ENCODE measurements at regions of chr4 and their contacts with region 1.

Region 1: DNA sequence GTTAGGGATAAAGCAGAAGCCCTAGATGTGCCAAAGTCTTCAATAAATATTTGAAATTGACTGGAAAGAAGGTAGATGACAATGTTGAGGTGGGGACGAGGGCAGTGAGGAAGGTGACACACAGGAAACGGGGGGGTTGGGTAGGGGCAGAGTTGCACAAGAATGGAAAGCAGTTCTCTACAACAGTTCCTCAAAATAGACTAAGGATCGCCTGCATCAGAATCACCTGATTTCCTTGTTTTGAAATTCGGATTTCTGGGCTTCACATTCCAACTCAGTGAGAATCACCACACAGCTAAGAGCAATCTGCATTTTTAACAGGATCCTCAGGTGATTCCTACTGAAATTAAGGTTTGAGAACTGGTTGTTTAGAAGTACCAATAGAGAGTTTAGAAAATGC is 70.6 kb downstream of the ARFIP1 start:
- DNase-seq: no peak
- H3K4me3 Mint-ChIP-seq: no peak overlapping the region
- H3K27ac Mint-ChIP-seq: no peak overlapping the region
- H3K4me1 Mint-ChIP-seq: peaks cover 13% of the 10 kb centered on the region
- H3K27me3 Mint-ChIP-seq: no peaks in the 10 kb centered on the region

Region 2: GRCh38 chr4:152803541-152803940 is 46.8 kb before region 1 on chr4:
- intact Hi-C with region 1: no loop called
- DNase-seq: no peak
- H3K4me3 Mint-ChIP-seq: no peak overlapping the region
- H3K27ac Mint-ChIP-seq: no peak overlapping the region
- H3K4me1 Mint-ChIP-seq: peaks cover 46% of the 10 kb centered on the region
- H3K27me3 Mint-ChIP-seq: no peaks in the 10 kb centered on the region

Region 3: GRCh38 chr4:152862608-152863007 is 12.2 kb after region 1 on chr4:
- intact Hi-C with region 1: no loop called
- DNase-seq: no peak
- H3K4me3 Mint-ChIP-seq: no peak overlapping the region
- H3K27ac Mint-ChIP-seq: no peak overlapping the region
- H3K4me1 Mint-ChIP-seq: no peaks in the 10 kb centered on the region
- H3K27me3 Mint-ChIP-seq: no peaks in the 10 kb centered on the region

Region 4: DNA sequence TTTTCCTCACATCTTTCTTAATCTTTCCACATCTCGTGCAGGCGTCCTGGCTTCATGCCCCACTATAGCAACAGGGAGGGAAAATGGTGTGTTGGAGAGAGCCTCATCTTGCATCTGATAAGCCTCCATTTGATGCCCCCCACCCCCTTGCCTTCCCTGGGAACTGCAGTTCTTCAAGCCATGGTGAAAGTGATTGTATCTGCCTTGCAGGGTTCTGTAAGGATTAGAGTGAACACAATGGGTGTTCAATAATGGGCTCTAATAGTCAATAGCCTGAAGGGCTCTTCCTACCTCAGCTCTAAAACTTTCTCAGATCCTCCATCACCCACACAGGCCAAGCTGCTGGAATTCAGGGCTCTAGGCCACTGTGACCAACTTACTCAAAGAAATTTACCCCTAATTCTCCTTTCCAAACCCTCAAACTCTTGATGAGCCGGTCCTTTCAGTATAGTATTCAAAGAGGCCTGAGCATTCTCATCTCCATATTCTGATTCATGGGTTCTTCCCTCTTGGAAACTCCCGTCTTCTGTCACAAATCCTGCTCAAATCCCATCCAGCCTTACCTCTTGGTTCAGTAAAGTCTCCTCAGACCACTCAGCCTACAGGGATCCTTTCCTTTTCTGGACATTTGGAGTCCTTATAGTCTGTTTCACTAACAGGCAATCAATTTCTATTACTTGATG is 225.6 kb after region 1 on chr4:
- intact Hi-C with region 1: no loop called
- DNase-seq: no peak
- H3K4me3 Mint-ChIP-seq: no peak overlapping the region
- H3K27ac Mint-ChIP-seq: no peak overlapping the region
- H3K4me1 Mint-ChIP-seq: no peaks in the 10 kb centered on the region
- H3K27me3 Mint-ChIP-seq: peaks cover 54% of the 10 kb centered on the region

Region 5: GRCh38 chr4:153127760-153128494 is 277.6 kb after region 1 on chr4:
- intact Hi-C with region 1: loop called (anchors 2 kb)
- DNase-seq: peak; percentile 70
- H3K4me3 Mint-ChIP-seq: no peak overlapping the region
- H3K27ac Mint-ChIP-seq: no peak overlapping the region
- H3K4me1 Mint-ChIP-seq: peaks cover 2% of the 10 kb centered on the region
- H3K27me3 Mint-ChIP-seq: peaks cover 30% of the 10 kb centered on the region

Measured in activated T-helper 2 cell treated with anti-CD3 and anti-CD28 coated beads, Interferon-gamma antibody, Interleukin-2, Interleukin-4, amounts not matched to agents 10 μg/mL and 5 μg/mL and 100 μg/mL, durations not matched to agents 14 hours and 24 hours and 36 hours (primary cell).